Mucosa of descending colon (tissue), 3 donors: ENCODE measurements at regions of chr1 and their contacts with region 1.

Region 1: GRCh38 chr1:79353224-79353623 is 346.7 kb upstream of the ADGRL4 start:
- DNase-seq: peak in 1 of 3 donors; percentile 64
- ATAC-seq: peak; percentile 34
- H3K4me3 ChIP-seq: no peak overlapping the region
- H3K4me1 ChIP-seq: no peaks in the 10 kb centered on the region
- CTCF ChIP-seq: no peak

Region 2: GRCh38 chr1:78839704-78840277 is 513.4 kb before region 1 on chr1:
- intact Hi-C with region 1: loop called in 1 of 2 experiments (anchors 5 kb)
- DNase-seq: peak in 1 of 3 donors; percentile 65
- ATAC-seq: peak; percentile 38
- H3K4me3 ChIP-seq: no peak overlapping the region
- H3K4me1 ChIP-seq: no peaks in the 10 kb centered on the region
- CTCF ChIP-seq: peak; percentile 21

Region 3: DNA sequence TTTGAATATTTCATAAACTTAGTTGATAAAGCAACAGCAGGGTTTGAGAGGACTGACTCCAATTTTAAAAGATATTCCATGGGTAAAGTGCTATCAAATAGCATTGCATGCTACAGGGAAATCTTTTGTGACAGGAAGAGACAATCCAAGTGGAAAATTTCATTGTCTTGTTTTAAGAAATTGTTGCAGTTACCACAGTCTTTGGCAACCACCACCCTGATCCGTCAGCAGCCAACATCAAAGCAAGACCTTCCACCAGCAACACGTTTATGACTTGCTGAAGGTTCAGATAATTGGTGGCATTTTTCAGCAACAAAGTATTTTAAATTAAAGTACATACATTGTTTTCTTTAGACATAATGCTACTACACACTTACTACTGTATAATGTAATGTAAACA is 394.5 kb before region 1 on chr1:
- intact Hi-C with region 1: no loop called
- DNase-seq: no peak
- ATAC-seq: no peak
- H3K4me3 ChIP-seq: no peak overlapping the region
- H3K4me1 ChIP-seq: no peaks in the 10 kb centered on the region
- CTCF ChIP-seq: no peak

Region 4: DNA sequence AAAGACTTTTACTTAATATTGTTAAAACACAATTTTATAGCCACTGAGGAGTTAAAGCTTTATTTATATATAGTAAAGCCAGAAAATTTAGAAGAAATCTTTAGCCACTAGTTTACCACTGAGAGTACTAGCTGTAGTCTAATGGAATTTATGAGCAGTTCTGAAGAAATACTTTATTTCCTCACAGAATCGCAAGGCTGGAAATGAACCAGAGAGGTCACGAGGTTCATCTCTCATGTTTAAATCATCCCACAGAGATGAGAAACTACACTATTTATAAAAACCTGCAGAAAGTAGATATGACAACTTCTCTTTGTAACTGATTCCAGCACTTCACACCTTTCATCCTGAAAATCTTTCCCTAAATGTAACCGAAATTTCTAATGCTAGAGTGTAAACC is 372.7 kb before region 1 on chr1:
- intact Hi-C with region 1: no loop called
- DNase-seq: no peak
- ATAC-seq: no peak
- H3K4me3 ChIP-seq: no peak overlapping the region
- H3K4me1 ChIP-seq: no peaks in the 10 kb centered on the region
- CTCF ChIP-seq: no peak

Region 5: GRCh38 chr1:79304131-79304530 is 49.1 kb before region 1 on chr1:
- intact Hi-C with region 1: no loop called
- DNase-seq: no peak
- ATAC-seq: no peak
- H3K4me3 ChIP-seq: no peak overlapping the region
- H3K4me1 ChIP-seq: no peaks in the 10 kb centered on the region
- CTCF ChIP-seq: no peak

Region 6: DNA sequence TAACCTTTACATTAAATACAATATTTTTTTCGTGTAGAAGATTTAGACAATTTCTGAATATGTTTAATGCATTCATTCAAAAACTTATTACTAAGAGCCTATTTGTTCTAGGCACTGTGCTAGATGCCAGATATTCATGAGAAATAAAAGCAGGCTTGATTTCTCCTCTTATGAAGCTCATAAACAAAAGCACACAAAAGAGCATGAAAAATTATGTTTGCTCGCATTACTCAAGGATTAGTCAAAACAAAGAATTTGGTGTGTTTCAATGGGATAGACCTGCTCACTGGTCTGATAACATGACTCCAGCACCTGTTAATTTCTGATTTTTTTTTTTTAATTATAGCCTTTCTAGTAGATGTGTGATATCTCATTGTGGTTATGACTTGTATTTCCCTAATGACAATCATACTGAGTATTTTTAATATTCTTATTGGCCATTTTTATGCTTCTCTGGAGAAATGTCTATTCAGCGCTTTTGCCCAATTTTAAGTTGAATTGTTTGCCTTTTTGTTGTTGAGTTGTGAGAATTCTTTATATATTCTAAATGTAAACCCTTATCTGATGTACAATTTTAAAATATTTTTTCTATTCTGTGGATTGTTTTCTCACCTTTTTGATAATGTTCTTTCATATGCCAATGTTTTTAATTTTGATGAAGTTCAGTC is 35.6 kb after region 1 on chr1:
- intact Hi-C with region 1: no loop called
- DNase-seq: no peak
- ATAC-seq: no peak
- H3K4me3 ChIP-seq: no peak overlapping the region
- H3K4me1 ChIP-seq: no peaks in the 10 kb centered on the region
- CTCF ChIP-seq: no peak